ENCODE measurements at regions of chr15 and their contacts with region 1.

Region 1: GRCh38 chr15:74202452-74203428 is at the start of gene STRA6:
- H3K4me3 ChIP-seq: no peak within 1 kb of the TSS
- H3K27ac ChIP-seq: peak within 1 kb of the TSS; percentile 78
- H3K4me1 ChIP-seq: peaks cover 42% of the 10 kb centered on the region
- CTCF ChIP-seq: no peak

Region 2: DNA sequence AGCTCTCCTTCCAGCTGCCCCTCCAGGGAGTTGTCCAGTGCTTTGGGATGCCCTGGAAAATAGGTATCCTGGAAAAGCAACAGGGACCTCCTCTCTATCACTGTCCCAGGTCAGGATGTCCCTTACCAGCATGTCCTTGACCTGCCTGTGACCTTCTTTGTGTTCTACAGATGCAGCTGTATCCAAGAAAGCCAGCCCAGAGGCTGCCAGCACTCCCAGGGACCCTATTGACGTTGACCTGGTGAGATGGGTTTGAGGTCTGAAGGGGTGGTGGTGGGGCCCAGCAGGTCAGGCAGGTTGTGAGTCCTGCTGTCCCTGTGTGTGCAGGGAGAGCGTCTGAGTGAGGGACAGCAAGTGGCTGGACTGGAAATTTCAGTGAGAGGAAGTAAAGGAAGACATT is 178.1 kb before region 1 on chr15:
- CTCF ChIA-PET with region 1: no interaction called
- POLR2A ChIA-PET with region 1: no interaction called
- H3K4me3 ChIP-seq: no peak overlapping the region
- H3K27ac ChIP-seq: no peak overlapping the region
- H3K4me1 ChIP-seq: no peaks in the 10 kb centered on the region
- CTCF ChIP-seq: no peak

Region 3: GRCh38 chr15:74062671-74063070 is 140.1 kb before region 1 on chr15:
- CTCF ChIA-PET with region 1: no interaction called
- POLR2A ChIA-PET with region 1: no interaction called
- H3K4me3 ChIP-seq: no peak overlapping the region
- H3K27ac ChIP-seq: no peak overlapping the region
- H3K4me1 ChIP-seq: no peaks in the 10 kb centered on the region
- CTCF ChIP-seq: no peak

Region 4: DNA sequence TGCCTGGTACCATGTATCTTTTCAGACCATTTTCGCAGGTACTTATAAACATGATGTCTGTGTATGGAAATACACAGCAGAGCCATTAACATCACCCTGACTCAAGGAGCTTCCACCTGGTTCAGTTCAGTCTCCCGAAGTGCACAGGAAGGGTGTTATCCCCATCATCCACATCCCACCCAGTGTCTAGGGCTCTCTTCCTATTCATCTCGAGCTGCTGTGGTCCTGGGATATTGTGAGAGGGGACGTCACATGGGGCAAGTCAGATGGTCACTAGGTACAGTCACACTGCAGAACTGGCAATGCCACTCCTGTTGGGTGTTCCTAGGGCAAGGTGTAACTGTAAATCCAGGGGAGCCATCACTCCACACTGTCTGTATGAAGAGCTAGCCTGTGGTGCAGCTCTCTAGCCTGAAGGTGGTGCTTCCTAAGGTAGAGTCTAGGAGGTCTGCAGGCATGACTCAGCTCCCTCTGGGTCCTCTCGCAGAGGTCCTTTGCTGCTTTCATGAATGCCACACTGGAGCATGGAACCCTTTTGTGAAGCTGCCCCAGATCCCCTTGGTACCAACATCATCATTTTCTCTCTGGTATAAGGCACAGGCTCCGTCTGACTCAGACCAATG is 58.5 kb before region 1 on chr15:
- CTCF ChIA-PET with region 1: interaction called, 14 read pairs
- POLR2A ChIA-PET with region 1: interaction called, 3 read pairs
- H3K4me3 ChIP-seq: no peak overlapping the region
- H3K27ac ChIP-seq: no peak overlapping the region
- H3K4me1 ChIP-seq: no peaks in the 10 kb centered on the region
- CTCF ChIP-seq: no peak

Region 5: DNA sequence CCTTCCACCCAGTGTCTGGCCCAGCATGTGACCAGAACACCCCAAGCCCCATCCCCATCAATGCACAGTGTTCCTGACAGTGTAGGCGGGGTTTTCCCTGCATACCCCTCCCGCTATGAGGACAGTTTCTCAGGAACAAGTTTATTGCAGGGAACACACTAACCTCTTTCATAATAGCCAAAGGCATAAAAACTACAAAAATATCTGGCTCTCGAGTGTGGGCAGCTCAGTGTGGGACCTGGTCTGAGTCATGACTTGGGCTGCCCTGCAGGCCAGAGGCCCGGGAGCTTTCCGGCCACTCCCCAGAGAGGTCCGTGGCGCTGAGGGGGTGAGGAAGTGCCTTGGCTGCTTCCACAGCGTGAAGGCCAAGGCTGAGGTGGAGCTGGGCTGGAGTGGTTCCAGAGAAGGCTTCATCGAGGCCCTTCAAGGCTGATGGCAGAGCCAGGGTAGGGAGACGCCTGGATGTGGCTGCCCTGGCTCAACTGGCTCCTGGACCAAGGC is 23.3 kb before region 1 on chr15:
- CTCF ChIA-PET with region 1: interaction called, 3 read pairs
- POLR2A ChIA-PET with region 1: interaction called, 21 read pairs
- H3K4me3 ChIP-seq: no peak overlapping the region
- H3K27ac ChIP-seq: no peak overlapping the region; the same call in 1 of the 2 replicates
- H3K4me1 ChIP-seq: peaks cover 13% of the 10 kb centered on the region
- CTCF ChIP-seq: no peak